ENCODE measurements at regions of chr2 and their contacts with region 1.

Region 1: DNA sequence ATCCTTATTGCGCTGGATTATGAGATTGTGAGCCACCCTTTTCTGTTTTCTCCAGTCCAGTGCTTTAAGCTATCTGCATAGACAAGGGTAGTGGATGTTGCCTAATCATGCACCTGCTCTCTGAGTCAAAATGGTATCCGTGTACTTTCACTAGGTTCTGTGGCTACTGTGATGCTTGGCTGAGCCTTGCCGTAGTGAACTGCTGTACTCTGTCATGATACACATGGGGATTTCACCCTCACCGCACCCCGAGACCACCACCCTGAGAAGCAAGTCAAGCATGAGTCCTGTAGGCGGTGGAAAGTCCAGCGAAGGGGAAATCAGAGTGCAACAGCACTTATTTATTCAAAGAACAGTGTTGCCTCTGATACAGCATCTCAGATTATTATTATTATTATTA is 55.0 kb downstream of the ARHGAP25 start:
- DNase-seq: peak; percentile 87
- CTCF ChIP-seq: no peak

Region 2: DNA sequence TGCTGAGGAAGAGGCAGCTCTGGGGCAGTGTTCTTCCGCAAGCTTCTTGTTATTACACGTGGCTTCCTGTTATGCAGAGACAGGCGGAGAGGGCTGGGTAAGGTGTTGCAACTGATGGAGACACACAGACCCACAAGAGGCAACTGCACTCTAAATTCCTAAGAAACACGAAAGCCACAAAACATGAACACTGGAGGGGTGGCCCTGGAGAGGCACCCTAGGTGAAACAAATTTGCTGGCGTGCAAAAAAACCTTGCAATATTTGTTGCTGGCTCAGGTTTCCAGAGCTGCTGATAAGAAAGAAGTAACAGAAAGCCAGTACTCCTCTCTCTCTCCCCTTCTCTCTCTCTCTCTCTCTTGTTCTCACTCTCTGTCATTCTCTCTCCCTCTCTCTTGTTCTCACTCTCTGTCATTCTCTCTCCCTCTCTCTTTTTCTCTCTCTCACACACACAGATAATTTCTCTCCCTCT is 23.2 kb before region 1 on chr2:
- CTCF ChIA-PET with region 1: interaction called, 17 read pairs
- POLR2A ChIA-PET with region 1: no interaction called
- DNase-seq: no peak
- CTCF ChIP-seq: no peak

Region 3: GRCh38 chr2:68774569-68775271 is 14.9 kb before region 1 on chr2:
- CTCF ChIA-PET with region 1: interaction called, 47 read pairs
- POLR2A ChIA-PET with region 1: no interaction called
- DNase-seq: peak; percentile 89
- CTCF ChIP-seq: no peak

Region 4: GRCh38 chr2:68837164-68837860 is 47.7 kb after region 1 on chr2:
- CTCF ChIA-PET with region 1: interaction called, 13 read pairs
- POLR2A ChIA-PET with region 1: no interaction called
- DNase-seq: peak; percentile 57
- CTCF ChIP-seq: peak; percentile 80

Measured in GM10248 (cell line).